Naive thymus-derived CD4-positive, alpha-beta T cell (primary cell): ENCODE measurements at regions of chr20 and their contacts with region 1.

Region 1: GRCh38 chr20:17471606-17472187 is 59.5 kb downstream of the BFSP1 start:
- DNase-seq: no peak
- ATAC-seq: no peak
- H3K4me3 ChIP-seq: no peak overlapping the region
- H3K4me3 Mint-ChIP-seq: no peak overlapping the region
- H3K27ac ChIP-seq: no peak overlapping the region
- H3K27ac Mint-ChIP-seq: no peak overlapping the region
- H3K4me1 ChIP-seq: no peaks in the 10 kb centered on the region
- H3K4me1 Mint-ChIP-seq: no peaks in the 10 kb centered on the region
- H3K27me3 ChIP-seq: no peaks in the 10 kb centered on the region
- H3K27me3 Mint-ChIP-seq: peaks cover 0 to 6% (median 0%) of the 10 kb centered on the region in 5 donors

Region 2: GRCh38 chr20:17419479-17420041 is 52.1 kb before region 1 on chr20:
- CTCF ChIA-PET with region 1: no interaction called
- POLR2A ChIA-PET with region 1: no interaction called
- intact Hi-C with region 1: loop called in 1 of 2 experiments (anchors 10 kb)
- DNase-seq: no peak
- ATAC-seq: no peak
- H3K4me3 ChIP-seq: no peak overlapping the region
- H3K4me3 Mint-ChIP-seq: no peak overlapping the region
- H3K27ac ChIP-seq: no peak overlapping the region
- H3K27ac Mint-ChIP-seq: no peak overlapping the region
- H3K4me1 ChIP-seq: no peaks in the 10 kb centered on the region
- H3K4me1 Mint-ChIP-seq: no peaks in the 10 kb centered on the region
- H3K27me3 ChIP-seq: no peaks in the 10 kb centered on the region
- H3K27me3 Mint-ChIP-seq: peaks cover 0 to 26% (median 11%) of the 10 kb centered on the region in 5 donors

Region 3: GRCh38 chr20:17491041-17491440 is 19.3 kb after region 1 on chr20:
- CTCF ChIA-PET with region 1: no interaction called
- POLR2A ChIA-PET with region 1: no interaction called
- intact Hi-C with region 1: no loop called
- DNase-seq: no peak
- ATAC-seq: no peak
- H3K4me3 ChIP-seq: no peak overlapping the region
- H3K4me3 Mint-ChIP-seq: no peak overlapping the region
- H3K27ac ChIP-seq: no peak overlapping the region
- H3K27ac Mint-ChIP-seq: no peak overlapping the region
- H3K4me1 ChIP-seq: no peaks in the 10 kb centered on the region
- H3K4me1 Mint-ChIP-seq: no peaks in the 10 kb centered on the region
- H3K27me3 ChIP-seq: no peaks in the 10 kb centered on the region
- H3K27me3 Mint-ChIP-seq: peaks cover 0 to 15% (median 3%) of the 10 kb centered on the region in 5 donors